ENCODE measurements at regions of chr13 and their contacts with region 1.

Region 1: DNA sequence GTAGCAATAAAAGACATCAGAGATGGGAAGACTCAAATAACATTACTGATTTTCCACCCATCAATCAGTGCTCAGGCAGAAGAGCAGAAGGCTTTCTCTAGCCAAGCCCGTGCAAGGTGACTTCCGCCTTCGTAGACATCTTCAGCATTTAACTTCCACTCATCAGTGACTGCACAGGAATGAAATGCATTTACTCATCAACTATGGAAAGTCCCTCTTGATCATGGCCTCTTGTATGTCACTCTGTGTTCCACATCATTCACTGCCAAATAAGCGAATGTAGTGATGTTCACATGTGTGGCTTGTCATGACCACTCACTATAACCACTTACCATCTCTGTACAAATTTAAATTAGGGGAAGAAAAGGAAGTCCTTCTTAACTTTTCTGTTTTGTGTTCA is 49.4 kb downstream of the SACS start:
- DNase-seq: no peak
- ATAC-seq: peak; percentile 40 to 71 (median 56)
- H3K4me3 ChIP-seq: no peak overlapping the region
- H3K27ac ChIP-seq: no peak overlapping the region
- H3K4me1 ChIP-seq: peaks cover 19% of the 10 kb centered on the region
- H3K27me3 ChIP-seq: no peaks in the 10 kb centered on the region
- CTCF ChIP-seq: no peak

Region 2: DNA sequence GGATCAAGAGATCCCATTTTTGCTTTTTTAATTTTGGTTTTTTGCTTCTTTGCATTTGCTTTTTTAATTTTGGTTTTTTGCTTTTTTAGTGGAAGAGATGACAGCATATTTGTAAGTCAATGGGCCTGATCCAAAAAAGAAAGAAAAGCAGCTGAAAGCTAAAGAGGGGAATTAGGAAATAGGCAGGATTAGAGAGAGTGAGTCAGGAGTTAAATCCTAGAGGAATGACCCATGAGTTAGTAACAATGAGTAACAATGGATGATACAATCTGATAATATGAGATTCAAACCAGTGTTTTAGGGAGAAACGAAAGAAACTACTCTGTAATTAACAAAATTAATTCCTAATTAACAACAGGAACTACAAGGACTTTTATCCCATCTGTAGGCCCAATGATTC is 314.5 kb before region 1 on chr13:
- intact Hi-C with region 1: no loop called
- DNase-seq: no peak
- ATAC-seq: no peak
- H3K4me3 ChIP-seq: no peak overlapping the region
- H3K27ac ChIP-seq: no peak overlapping the region
- H3K4me1 ChIP-seq: peaks cover 9% of the 10 kb centered on the region
- H3K27me3 ChIP-seq: no peaks in the 10 kb centered on the region
- CTCF ChIP-seq: no peak

Region 3: GRCh38 chr13:23427342-23427843 is 43.3 kb after region 1 on chr13:
- intact Hi-C with region 1: loop called (anchors 5 kb)
- DNase-seq: no peak
- ATAC-seq: peak; percentile 69 to 83 (median 78)
- H3K4me3 ChIP-seq: peak overlapping the region; percentile 49
- H3K27ac ChIP-seq: peak overlapping the region; percentile 79
- H3K4me1 ChIP-seq: peaks cover 42% of the 10 kb centered on the region
- H3K27me3 ChIP-seq: no peaks in the 10 kb centered on the region
- CTCF ChIP-seq: no peak